Activated CD4-positive, alpha-beta T cell treated with anti-CD3 and anti-CD28 coated beads, Interleukin-2, amount 10 ng/mL, durations not matched to agents 7 days and 5 days (primary cell): ENCODE measurements at regions of chr16 and their contacts with region 1.

Region 1: GRCh38 chr16:83887081-83887480 is 11.8 kb upstream of the MLYCD start:
- DNase-seq: no peak
- H3K4me3 Mint-ChIP-seq: no peak overlapping the region
- H3K27ac Mint-ChIP-seq: no peak overlapping the region
- H3K4me1 Mint-ChIP-seq: no peaks in the 10 kb centered on the region
- H3K27me3 Mint-ChIP-seq: peaks cover 7% of the 10 kb centered on the region

Region 2: DNA sequence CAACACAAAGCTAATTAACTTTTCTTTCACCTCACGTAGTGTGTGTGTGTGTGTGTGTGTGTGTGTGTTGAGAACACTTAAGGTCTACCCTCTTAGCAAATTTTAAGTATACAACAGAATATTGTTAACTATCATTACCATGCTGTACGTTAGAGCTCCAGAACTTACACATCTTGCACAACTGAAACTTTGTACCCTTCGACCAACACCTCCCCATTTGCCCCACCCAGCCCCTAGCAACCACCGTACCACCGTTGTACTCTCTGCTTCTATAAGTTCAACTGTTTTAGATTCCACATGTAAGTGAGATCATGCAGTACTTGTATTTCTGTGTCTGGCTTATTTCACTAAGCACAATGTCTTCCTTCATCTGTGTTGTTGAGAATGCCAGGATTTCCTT is 16.3 kb before region 1 on chr16:
- CTCF ChIA-PET with region 1: no interaction called
- POLR2A ChIA-PET with region 1: interaction called, 12 read pairs
- DNase-seq: no peak
- H3K4me3 Mint-ChIP-seq: no peak overlapping the region
- H3K27ac Mint-ChIP-seq: no peak overlapping the region
- H3K4me1 Mint-ChIP-seq: no peaks in the 10 kb centered on the region
- H3K27me3 Mint-ChIP-seq: peaks cover 47% of the 10 kb centered on the region